GM10248 (cell line): ENCODE measurements at regions of chr11 and their contacts with region 1.

Region 1: DNA sequence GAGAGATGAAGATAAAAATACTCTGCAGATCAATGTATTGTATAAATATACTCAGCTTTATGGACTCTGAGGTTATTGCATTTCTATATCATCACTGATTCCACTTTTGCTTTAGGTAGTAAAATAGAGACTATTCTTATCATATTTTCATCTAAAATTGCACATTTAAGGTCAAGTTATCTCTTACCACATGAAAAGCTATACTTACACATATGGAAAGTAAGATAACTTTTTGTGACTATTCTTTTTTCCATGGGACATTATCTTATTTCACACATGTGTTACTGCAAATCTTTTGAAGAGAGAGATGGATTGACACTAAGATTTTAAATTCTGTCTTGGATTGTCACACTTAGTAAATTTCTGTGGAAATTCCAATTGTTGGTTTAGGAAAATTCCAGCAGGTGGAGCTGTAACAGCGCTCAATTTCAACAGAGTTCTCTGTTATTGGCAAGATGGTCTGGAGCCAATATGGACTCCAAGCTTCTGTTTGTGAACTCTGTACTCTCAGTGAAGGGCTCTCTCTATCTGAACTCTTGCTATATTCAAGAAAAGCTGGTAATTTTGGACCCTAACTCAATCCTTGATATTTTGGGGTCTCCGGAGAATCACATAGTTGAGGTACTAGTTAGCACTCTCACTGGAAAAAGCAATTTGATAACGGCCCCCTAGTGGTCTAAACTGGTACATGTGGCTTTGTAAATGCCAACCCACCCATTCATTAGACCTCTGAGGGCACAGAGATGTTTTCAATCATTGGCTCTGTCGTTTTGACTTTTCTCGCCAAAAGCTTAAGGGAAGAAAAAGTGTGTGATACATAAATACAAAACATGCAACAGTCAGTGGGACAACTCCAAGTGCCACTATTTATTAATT is 429.7 kb downstream of the ETS1 start:
- DNase-seq: peak; percentile 43
- CTCF ChIP-seq: peak; percentile 56

Region 2: DNA sequence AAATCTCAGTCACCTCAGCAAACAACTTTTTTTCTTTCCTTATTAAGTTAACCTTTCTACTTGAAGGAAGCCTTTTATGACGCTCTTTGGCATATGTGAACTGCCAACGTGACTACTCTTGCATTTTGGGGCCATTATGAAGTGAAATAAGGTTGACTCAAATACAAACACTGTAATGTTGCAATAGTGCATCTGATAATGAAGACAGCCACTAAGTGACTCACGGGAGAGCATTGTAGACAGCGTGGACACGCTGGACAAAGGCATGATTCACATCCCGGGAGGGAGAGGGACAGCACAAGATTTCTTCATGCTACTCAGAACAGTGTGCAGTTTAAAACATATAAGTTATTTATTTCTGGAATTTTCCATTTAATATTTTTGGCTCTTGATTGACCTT is 131.1 kb before region 1 on chr11:
- CTCF ChIA-PET with region 1: interaction called, 24 read pairs
- POLR2A ChIA-PET with region 1: no interaction called
- DNase-seq: no peak
- CTCF ChIP-seq: no peak

Region 3: DNA sequence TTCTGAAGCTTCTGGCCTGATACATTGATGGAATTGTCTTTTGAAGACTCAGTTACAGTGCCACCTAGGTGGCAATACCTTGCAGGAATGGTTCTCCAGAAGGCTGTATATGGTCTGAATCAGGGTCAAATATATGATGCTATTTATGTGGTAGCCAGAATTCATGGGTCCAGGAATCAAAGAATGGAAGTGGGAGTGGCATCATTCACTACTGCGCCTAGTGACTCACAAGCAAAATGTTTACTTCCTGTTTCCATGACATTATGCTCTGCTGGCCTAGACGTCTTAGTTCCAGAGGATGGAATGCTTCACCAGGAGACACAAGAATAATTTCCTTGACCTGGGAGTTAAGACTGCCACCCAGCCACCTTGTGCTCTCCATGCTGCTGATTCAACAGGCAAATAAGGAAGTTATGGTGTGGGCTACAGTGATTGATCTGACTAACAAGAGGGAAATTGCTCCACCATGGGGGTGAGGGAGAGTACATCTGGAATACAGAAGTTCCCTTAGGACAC is 62.1 kb before region 1 on chr11:
- CTCF ChIA-PET with region 1: no interaction called
- POLR2A ChIA-PET with region 1: no interaction called
- DNase-seq: no peak
- CTCF ChIP-seq: no peak

Region 4: GRCh38 chr11:128146926-128147605 is 10.6 kb before region 1 on chr11:
- CTCF ChIA-PET with region 1: interaction called, 31 read pairs
- POLR2A ChIA-PET with region 1: no interaction called
- DNase-seq: no peak
- CTCF ChIP-seq: no peak

Region 5: DNA sequence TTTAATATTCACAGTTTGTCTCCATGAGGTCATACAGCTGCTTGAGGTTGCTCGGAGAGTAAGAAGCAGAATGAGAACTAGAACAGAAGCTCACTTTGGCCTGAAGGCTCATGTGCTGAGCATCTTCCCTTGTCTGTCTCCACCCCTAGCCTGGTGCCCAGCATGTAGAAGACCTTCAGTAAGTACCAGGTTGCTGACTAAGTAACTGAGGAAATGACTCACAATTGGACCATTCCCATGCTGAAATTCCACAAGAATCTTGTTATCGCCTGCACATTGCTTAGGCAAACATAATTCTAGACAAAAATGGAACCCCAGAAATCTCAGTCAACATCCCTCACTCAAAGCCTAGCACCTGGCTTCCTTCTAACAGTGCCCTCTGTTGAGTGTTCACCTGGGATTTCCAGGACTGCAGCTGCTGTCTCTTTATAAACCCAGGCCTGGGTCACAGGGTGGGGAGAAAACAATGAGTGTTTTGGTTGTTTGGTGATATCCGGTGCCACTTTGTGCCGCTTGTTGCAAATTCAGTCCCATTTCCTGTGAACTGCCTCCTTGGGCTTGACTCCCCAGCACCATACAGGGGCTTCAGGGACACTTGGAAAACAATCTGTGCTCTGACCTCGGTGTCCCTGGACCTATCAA is 22.9 kb after region 1 on chr11:
- CTCF ChIA-PET with region 1: interaction called, 27 read pairs
- POLR2A ChIA-PET with region 1: no interaction called
- DNase-seq: no peak
- CTCF ChIP-seq: no peak

Region 6: GRCh38 chr11:128848815-128849455 is 691.3 kb after region 1 on chr11:
- CTCF ChIA-PET with region 1: interaction called, 35 read pairs
- POLR2A ChIA-PET with region 1: no interaction called
- DNase-seq: peak; percentile 74
- CTCF ChIP-seq: peak; percentile 82